ENCODE measurements at regions of chr5 and their contacts with region 1.

Region 1: GRCh38 chr5:104178829-104179456 is 616.4 kb upstream of the NUDT12 start:
- DNase-seq: peak; percentile 68
- ATAC-seq: peak; percentile 99
- H3K4me3 ChIP-seq: no peak overlapping the region
- H3K27ac ChIP-seq: no peak overlapping the region
- H3K4me1 ChIP-seq: peaks cover 0 to 2% of the 10 kb centered on the region in 2 experiments; a peak in 1 of 4 replicates
- H3K27me3 ChIP-seq: no peaks in the 10 kb centered on the region
- CTCF ChIP-seq: peak; percentile 45 to 75 (median 55); a peak in 5 of 6 replicates
- POLR2A ChIP-seq: no peak
- RAD21 ChIP-seq: peak; percentile 87

Region 2: DNA sequence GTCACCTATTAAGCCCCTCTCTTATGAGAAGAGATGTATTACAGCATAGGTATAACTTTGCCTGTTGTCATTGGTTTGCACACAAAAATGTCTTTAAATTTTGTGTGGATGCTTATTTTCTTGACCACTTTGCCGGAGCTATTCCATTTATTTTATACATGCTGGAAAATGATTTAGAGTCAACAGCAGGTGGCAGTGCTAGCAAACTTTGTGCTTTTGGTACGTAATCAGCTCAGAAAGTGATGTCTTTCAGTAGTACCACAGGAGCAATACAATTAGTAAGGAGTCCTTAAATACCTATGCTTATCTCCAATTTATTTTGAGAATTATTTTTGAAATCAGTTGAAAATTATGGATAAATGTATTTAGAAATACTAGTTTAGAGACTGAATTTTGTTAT is 596.6 kb before region 1 on chr5:
- CTCF ChIA-PET with region 1: interaction called, 28 read pairs
- POLR2A ChIA-PET with region 1: no interaction called
- RAD21 ChIA-PET with region 1: interaction called in 1 of 2 experiments, 3 read pairs
- intact Hi-C with region 1: loop called (anchors 1 kb)
- DNase-seq: peak; percentile 53
- ATAC-seq: peak; percentile 70
- H3K4me3 ChIP-seq: no peak overlapping the region
- H3K27ac ChIP-seq: no peak overlapping the region
- H3K4me1 ChIP-seq: no peaks in the 10 kb centered on the region
- H3K27me3 ChIP-seq: no peaks in the 10 kb centered on the region
- CTCF ChIP-seq: peak; percentile 37 to 68 (median 47); a peak in 5 of 6 replicates
- POLR2A ChIP-seq: no peak
- RAD21 ChIP-seq: peak; percentile 73

Region 3: DNA sequence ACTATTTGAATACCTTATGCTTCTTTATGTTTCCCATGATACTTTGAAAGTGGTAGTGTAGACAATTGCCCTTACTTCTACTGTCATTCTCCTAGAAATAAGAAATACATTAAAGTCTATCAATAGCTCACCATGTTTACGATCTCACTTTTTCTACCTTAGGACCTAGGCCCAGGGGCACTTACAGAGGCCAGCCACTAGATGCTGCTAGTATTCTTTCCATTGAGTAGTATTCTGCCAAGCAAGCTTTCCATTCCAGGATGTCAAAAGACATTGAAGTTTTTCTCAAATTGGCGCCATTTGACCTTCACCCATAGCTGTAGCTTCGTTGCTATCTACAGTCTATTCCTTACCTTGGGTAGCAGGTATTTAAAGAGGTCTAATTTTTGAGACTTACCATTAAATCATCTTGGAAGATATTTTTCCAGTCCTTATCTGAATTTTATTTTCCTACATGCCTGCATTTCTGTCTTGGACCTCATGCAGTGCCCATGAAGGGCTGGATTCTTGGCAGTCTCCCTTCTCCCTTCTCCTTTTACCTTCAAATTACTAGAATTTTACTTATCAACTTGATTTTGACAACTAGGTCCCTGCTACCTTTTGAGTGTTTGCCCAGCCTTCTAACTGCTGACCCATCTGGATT is 370.4 kb before region 1 on chr5:
- CTCF ChIA-PET with region 1: interaction called, 64 read pairs
- POLR2A ChIA-PET with region 1: no interaction called
- RAD21 ChIA-PET with region 1: interaction called, 7 to 14 read pairs
- intact Hi-C with region 1: loop called (anchors 1 kb)
- DNase-seq: peak; percentile 61
- ATAC-seq: peak; percentile 99
- H3K4me3 ChIP-seq: no peak overlapping the region
- H3K27ac ChIP-seq: no peak overlapping the region
- H3K4me1 ChIP-seq: peaks cover 0 to 5% of the 10 kb centered on the region in 2 experiments; a peak in 2 of 4 replicates
- H3K27me3 ChIP-seq: no peaks in the 10 kb centered on the region
- CTCF ChIP-seq: peak; percentile 59 to 99 (median 98); a peak in 5 of 6 replicates
- POLR2A ChIP-seq: no peak
- RAD21 ChIP-seq: peak; percentile 96

Region 4: DNA sequence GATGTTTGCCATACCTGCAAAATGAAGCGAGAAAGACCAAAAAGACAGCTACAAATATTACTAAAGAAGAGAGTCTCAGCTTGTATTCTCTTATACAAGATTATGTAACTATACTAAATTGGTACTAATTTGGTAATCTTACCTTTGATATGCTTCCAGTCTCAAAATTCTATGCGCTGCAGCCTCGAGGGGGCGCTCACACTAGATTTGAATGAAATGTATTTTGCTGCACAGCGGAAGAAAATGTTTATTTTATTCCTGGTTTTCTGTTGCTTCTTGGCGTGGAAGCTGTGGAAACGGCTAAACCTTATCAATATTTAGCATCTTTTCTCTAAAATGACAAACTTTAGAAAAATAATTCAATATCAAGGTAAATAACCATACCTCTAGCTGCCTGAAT is 349.4 kb before region 1 on chr5:
- CTCF ChIA-PET with region 1: interaction called, 7 read pairs
- POLR2A ChIA-PET with region 1: no interaction called
- RAD21 ChIA-PET with region 1: no interaction called
- intact Hi-C with region 1: loop called (anchors 1 kb)
- DNase-seq: no peak
- ATAC-seq: no peak
- H3K4me3 ChIP-seq: no peak overlapping the region
- H3K27ac ChIP-seq: no peak overlapping the region
- H3K4me1 ChIP-seq: no peaks in the 10 kb centered on the region
- H3K27me3 ChIP-seq: no peaks in the 10 kb centered on the region
- CTCF ChIP-seq: peak; percentile 33 to 85 (median 80); a peak in 5 of 6 replicates
- POLR2A ChIP-seq: no peak
- RAD21 ChIP-seq: peak; percentile 51

Region 5: DNA sequence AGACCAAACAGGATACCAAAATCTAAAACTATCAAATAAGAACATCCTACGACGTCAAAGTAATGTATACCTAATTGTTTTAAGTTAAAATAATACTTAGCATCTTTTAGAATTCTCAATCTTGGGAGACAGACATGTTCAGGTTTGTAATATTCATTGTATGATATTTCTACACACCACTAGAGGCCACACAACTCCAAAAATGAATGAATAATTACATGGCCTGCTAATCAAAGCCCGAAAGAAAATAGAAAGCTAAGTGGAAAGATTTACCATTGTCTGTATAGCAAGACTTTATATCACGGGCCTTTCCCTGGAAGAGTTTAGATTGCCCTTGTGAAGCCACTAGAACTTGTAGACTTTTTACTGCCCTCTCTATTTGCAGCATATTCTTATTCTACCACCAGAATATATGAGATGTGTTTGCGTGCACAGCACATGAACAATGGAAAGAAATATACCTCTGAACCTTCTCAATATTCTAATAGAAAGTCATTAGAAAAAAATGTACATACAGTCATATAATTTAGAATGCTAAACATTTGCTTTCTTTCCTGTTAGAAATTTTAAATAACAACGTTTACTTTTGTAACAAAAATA is 236.3 kb before region 1 on chr5:
- CTCF ChIA-PET with region 1: interaction called, 5 read pairs
- POLR2A ChIA-PET with region 1: no interaction called
- RAD21 ChIA-PET with region 1: interaction called in 1 of 2 experiments, 4 read pairs
- intact Hi-C with region 1: loop called (anchors 5 kb)
- DNase-seq: no peak
- ATAC-seq: peak; percentile 40; the same call in 1 of the 2 replicates
- H3K4me3 ChIP-seq: no peak overlapping the region
- H3K27ac ChIP-seq: no peak overlapping the region
- H3K4me1 ChIP-seq: no peaks in the 10 kb centered on the region
- H3K27me3 ChIP-seq: no peaks in the 10 kb centered on the region
- CTCF ChIP-seq: peak; percentile 20 to 45 (median 25); a peak in 3 of 6 replicates
- POLR2A ChIP-seq: no peak
- RAD21 ChIP-seq: peak; percentile 60

Region 6: DNA sequence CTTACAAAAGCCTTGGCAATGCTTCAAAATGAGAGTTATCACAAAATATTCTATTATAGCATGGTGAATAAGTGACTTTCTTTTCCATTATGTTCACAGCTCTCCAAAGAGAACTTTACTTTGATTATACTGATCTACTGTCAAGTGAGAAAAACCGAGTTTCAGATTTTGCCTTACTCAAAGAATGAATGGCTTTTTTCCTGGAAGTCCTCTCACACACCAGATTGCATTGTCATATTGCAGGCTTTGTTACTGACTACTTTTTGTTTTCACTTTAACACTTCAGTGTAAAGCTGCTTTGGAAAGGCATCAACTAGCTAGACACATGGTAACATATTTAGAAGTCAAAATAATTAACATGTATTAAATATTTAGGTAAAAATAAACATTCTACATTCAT is 148.9 kb after region 1 on chr5:
- CTCF ChIA-PET with region 1: no interaction called
- POLR2A ChIA-PET with region 1: no interaction called
- RAD21 ChIA-PET with region 1: no interaction called
- intact Hi-C with region 1: no loop called
- DNase-seq: no peak
- ATAC-seq: no peak
- H3K4me3 ChIP-seq: no peak overlapping the region
- H3K27ac ChIP-seq: no peak overlapping the region
- H3K4me1 ChIP-seq: no peaks in the 10 kb centered on the region
- H3K27me3 ChIP-seq: no peaks in the 10 kb centered on the region
- CTCF ChIP-seq: no peak
- POLR2A ChIP-seq: no peak
- RAD21 ChIP-seq: no peak

Measured in HCT116 (cell line).